ENCODE measurements at regions of chr11 and their contacts with region 1.

Region 1: DNA sequence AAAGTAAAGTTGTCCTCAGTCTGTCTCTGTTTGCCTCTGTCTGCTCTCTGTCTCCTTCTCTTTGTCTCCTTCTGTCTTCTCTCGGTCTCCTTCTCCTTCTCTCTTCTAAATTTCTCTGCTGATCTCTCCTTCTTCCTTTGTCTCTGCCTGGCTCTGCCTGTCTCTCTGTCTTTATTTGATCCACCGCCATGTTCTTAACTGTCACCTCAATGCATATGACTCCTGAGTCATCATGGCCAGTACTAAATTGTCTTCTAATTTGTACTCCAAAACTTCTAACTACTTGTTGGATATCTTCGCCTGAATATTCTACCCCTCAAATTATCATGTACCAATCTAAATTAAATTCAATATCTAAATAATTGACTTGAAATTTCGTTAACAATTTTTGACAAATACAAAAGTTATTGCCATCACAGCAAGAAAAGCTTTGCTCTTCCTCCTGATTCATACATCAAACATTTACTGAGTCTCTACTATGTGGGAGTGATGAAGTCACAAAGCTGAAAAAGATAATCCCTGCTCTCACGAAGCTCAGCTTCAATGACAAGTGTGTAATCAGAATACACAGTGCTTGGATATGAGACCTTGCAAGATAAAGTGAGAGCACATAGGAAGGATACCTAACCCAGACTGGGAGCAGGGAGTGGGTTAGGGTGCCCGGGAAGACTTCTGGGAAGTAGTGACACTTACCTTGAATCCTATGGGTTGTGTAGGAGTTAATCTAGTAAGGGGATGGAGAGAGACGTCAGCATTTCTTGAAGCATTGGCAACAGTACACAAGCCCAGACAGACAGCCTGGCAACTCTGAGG is 193.0 kb downstream of the MAML2 start:
- DNase-seq: no peak
- H3K4me3 ChIP-seq: no peak overlapping the region
- H3K4me3 Mint-ChIP-seq: no peak overlapping the region
- H3K27ac Mint-ChIP-seq: no peak overlapping the region
- H3K4me1 ChIP-seq: peaks cover 59% of the 10 kb centered on the region
- H3K4me1 Mint-ChIP-seq: peaks cover 35% of the 10 kb centered on the region
- H3K27me3 ChIP-seq: no peaks in the 10 kb centered on the region
- H3K27me3 Mint-ChIP-seq: no peaks in the 10 kb centered on the region
- CTCF ChIP-seq: no peak

Region 2: DNA sequence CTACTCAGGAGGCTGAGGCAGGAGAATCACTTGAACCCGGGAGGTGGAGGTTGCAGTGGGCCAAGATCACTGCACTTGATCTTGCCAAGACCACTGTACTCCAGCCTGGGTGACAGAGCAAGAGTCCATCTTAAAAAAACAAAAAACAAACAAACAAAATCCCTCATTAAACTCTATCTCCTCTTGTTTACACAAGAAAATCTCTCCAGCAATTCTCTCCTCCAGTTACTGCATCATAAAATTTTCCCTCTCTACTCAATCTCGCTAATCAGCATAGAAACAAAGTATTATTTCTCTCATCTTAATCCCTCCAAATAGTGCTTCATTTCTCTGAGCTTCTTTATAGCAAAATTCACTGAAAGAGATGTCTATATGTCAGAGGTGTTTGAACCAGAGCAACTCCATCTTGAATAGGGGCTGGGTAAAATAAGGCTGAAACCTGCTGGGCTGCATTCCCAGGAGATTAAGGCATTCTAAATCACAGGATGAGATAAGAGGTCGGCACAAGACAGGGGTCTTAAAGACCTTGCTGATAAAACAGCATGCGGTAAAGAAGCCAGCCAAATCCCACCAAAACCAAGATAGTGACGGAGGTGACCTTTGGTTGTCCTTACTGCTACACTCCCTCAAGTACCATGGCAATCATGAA is 245.8 kb before region 1 on chr11:
- CTCF ChIA-PET with region 1: no interaction called
- POLR2A ChIA-PET with region 1: no interaction called
- intact Hi-C with region 1: loop called (anchors 1 kb)
- DNase-seq: peak; percentile 86 to 90
- H3K4me3 ChIP-seq: no peak overlapping the region
- H3K4me3 Mint-ChIP-seq: no peak overlapping the region
- H3K27ac Mint-ChIP-seq: no peak overlapping the region
- H3K4me1 ChIP-seq: peaks cover 49% of the 10 kb centered on the region
- H3K4me1 Mint-ChIP-seq: peaks cover 9% of the 10 kb centered on the region
- H3K27me3 ChIP-seq: no peaks in the 10 kb centered on the region
- H3K27me3 Mint-ChIP-seq: no peaks in the 10 kb centered on the region
- CTCF ChIP-seq: no peak

Region 3: GRCh38 chr11:96168623-96169022 is 18.7 kb after region 1 on chr11:
- CTCF ChIA-PET with region 1: no interaction called
- POLR2A ChIA-PET with region 1: no interaction called
- intact Hi-C with region 1: no loop called
- DNase-seq: no peak
- H3K4me3 ChIP-seq: no peak overlapping the region
- H3K4me3 Mint-ChIP-seq: no peak overlapping the region
- H3K27ac Mint-ChIP-seq: no peak overlapping the region
- H3K4me1 ChIP-seq: peaks cover 14% of the 10 kb centered on the region
- H3K4me1 Mint-ChIP-seq: peaks cover 30% of the 10 kb centered on the region
- H3K27me3 ChIP-seq: no peaks in the 10 kb centered on the region
- H3K27me3 Mint-ChIP-seq: no peaks in the 10 kb centered on the region
- CTCF ChIP-seq: no peak

Region 4: DNA sequence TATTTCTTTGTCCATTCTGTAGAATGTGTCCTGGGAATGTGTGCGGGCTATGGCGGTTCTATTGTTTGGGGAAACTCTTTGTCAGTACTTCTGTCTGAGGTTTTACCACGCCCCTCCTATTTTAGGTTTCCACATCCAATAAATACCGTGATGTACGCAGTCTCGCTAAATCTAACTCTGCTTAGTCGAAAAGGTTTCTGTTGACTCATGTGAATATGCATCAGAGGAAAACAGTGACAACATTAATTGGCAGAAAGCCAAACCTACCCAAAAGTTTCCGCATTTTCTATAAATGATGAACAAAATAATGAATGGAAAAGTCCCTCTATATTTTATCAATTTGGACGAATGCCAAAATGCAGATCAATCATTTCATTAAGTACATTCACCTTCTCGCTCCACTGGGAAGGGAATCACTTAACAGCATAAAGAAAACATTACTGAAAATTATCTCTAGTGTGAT is 49.6 kb after region 1 on chr11:
- CTCF ChIA-PET with region 1: interaction called, 3 read pairs
- POLR2A ChIA-PET with region 1: no interaction called
- intact Hi-C with region 1: loop called (anchors 2 kb)
- DNase-seq: no peak
- H3K4me3 ChIP-seq: no peak overlapping the region
- H3K4me3 Mint-ChIP-seq: no peak overlapping the region
- H3K27ac Mint-ChIP-seq: peak overlapping the region; percentile 90
- H3K4me1 ChIP-seq: peaks cover 30% of the 10 kb centered on the region
- H3K4me1 Mint-ChIP-seq: peaks cover 31% of the 10 kb centered on the region
- H3K27me3 ChIP-seq: no peaks in the 10 kb centered on the region
- H3K27me3 Mint-ChIP-seq: no peaks in the 10 kb centered on the region
- CTCF ChIP-seq: no peak